ENCODE measurements at regions of chr4 and their contacts with region 1.

Region 1: DNA sequence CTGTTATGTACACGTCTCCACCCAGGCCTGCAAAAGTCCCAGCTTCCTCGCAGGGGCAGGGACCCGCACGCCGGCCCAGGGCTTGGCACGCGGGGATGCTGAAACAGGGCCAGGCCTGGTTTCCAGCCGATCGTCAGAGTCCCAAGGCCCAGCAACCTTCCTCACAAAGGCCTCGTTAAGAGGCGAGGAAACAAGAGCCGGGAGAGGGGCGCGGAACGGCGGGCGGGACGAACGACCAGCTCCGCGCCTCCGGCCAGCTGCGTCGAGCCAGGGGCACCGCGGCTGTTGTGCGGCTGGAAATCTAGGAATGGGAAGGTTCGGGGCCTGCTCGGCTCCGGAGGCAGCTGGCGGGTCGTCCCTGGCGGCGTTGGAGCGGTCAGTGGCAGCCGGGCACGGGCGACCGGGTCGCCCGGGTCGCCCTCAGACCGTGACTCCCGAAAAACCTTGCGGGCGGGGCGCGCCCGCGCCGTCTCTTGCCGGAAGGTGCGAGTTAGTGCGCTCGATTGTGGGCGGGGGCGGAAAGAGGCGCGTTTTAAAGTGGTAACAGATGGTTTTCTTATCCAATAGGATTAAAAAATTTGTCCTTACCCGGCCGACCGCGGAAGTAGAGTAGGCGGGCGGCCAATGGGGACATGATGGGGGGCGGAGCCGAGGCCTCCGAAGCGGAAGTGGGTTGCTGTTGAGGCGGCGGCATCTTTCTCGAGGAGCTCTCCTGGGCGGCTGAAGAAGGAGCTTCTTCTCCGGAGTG is at the start of gene RNF4:
- DNase-seq: peak; percentile 91 to 93
- H3K4me3 ChIP-seq: peak within 1 kb of the TSS; percentile 94
- H3K27ac ChIP-seq: peak within 1 kb of the TSS; percentile 57
- H3K4me1 ChIP-seq: peaks cover 5% of the 10 kb centered on the region
- H3K27me3 ChIP-seq: no peaks in the 10 kb centered on the region
- CTCF ChIP-seq: no peak
- total RNA-seq, gene RNF4: 63.5 and 95.4 TPM in 2 replicates

Region 2: GRCh38 chr4:898869-899555 is 1569.6 kb before region 1 on chr4:
- CTCF ChIA-PET with region 1: interaction called, 17 read pairs
- POLR2A ChIA-PET with region 1: no interaction called
- intact Hi-C with region 1: no loop called
- DNase-seq: no peak
- H3K4me3 ChIP-seq: no peak overlapping the region
- H3K27ac ChIP-seq: no peak overlapping the region
- H3K4me1 ChIP-seq: no peaks in the 10 kb centered on the region
- H3K27me3 ChIP-seq: no peaks in the 10 kb centered on the region
- CTCF ChIP-seq: no peak

Region 3: DNA sequence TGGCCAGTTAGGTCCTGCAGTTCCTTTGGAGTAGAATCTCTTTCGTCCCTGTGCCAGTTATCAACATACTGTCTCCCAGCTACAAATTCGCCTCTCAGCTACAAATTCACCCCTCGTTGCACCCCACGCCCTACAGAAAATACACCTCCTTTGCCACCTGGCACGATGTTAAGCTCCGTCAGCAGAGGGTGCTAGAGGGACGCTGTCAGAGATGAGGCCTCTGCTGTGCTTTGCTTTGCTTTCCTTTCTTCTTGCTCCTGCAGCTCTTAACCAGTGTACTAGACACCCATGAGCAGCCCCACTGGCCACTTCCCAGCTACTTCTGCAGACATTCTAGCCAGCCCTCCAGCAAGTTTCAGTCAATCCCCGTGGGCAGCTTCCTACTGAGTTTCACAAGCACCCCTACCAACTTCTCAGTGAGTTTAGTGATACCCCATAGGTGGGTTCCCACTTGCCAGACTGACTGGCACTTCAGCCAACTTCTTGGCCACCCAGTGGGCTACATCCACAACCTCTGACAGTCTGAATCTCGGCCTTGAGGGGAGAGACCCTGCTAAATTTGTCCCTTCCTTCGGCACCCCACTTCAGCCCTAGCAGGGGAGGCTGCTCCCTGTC is 248.5 kb before region 1 on chr4:
- CTCF ChIA-PET with region 1: no interaction called
- POLR2A ChIA-PET with region 1: interaction called, 12 read pairs
- intact Hi-C with region 1: loop called (anchors 2 kb)
- DNase-seq: peak; percentile 60 to 73
- H3K4me3 ChIP-seq: no peak overlapping the region
- H3K27ac ChIP-seq: no peak overlapping the region
- H3K4me1 ChIP-seq: peaks cover 14% of the 10 kb centered on the region
- H3K27me3 ChIP-seq: no peaks in the 10 kb centered on the region
- CTCF ChIP-seq: peak; percentile 89

Region 4: DNA sequence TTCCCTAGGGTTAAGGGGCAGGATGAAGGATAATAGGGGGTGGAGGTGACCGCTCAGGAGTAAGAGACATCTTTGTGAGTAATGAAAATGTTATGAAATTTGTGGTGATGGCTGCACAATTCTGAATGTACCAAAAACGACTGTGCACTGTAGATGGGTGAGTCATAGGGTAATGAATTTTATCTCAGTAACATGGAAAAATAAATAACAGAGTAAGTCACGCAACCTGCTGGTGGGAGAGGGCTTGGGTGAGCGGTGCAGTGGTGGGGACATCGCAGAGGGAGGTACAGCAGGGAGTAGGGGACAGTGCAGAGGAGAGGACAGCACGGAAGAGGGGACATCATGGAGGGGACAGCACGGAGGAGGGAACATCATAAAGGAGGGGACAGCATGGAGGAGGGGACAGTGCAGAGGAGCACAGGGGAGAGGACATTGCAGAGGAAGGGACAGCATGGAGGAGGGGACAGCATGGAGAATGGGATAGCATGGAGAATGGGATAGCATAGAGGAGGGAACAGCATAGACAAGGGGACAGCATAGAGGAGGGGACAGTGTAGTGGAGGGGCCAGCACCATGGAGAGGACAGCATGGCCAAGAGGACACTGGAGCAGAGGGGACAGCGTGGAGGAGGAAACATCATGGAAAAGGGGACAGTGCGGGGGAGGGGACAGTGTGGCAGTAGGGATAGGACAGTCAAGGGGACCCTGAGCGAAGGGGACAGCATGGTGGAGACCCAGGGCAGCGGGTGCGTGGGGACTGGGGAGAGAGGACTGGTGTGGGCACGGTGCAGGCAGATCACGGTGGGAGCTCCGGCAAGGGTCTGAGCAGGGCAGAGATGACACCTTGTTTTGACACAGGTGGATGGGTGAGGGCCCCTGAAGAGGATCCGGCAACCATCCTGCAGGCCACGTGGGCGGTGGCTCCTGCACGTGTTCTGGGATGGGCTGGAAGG is 138.3 kb before region 1 on chr4:
- CTCF ChIA-PET with region 1: no interaction called
- POLR2A ChIA-PET with region 1: no interaction called
- intact Hi-C with region 1: loop called (anchors 10 kb)
- DNase-seq: peak; percentile 28 to 82
- H3K4me3 ChIP-seq: no peak overlapping the region
- H3K27ac ChIP-seq: no peak overlapping the region
- H3K4me1 ChIP-seq: peaks cover 11% of the 10 kb centered on the region
- H3K27me3 ChIP-seq: no peaks in the 10 kb centered on the region
- CTCF ChIP-seq: no peak

Region 5: GRCh38 chr4:2536193-2537010 is 67.8 kb after region 1 on chr4 and contains the start of gene FAM193A:
- CTCF ChIA-PET with region 1: no interaction called
- POLR2A ChIA-PET with region 1: interaction called, 6 read pairs
- intact Hi-C with region 1: loop called (anchors 2 kb)
- DNase-seq: peak; percentile 96 to 99
- H3K4me3 ChIP-seq: peak within 1 kb of the TSS; percentile 81
- H3K27ac ChIP-seq: peak within 1 kb of the TSS; percentile 44; the same call in 1 of the 2 replicates
- H3K4me1 ChIP-seq: peaks cover 13% of the 10 kb centered on the region; the same call in 1 of the 2 replicates
- H3K27me3 ChIP-seq: no peaks in the 10 kb centered on the region
- CTCF ChIP-seq: no peak
- total RNA-seq, gene FAM193A: 20.1 and 23.4 TPM in 2 replicates

Measured in PC-9 (cell line).